Right ventricle myocardium inferior (tissue), 1 donor: ENCODE measurements at regions of chr1 and their contacts with region 1.

Region 1: DNA sequence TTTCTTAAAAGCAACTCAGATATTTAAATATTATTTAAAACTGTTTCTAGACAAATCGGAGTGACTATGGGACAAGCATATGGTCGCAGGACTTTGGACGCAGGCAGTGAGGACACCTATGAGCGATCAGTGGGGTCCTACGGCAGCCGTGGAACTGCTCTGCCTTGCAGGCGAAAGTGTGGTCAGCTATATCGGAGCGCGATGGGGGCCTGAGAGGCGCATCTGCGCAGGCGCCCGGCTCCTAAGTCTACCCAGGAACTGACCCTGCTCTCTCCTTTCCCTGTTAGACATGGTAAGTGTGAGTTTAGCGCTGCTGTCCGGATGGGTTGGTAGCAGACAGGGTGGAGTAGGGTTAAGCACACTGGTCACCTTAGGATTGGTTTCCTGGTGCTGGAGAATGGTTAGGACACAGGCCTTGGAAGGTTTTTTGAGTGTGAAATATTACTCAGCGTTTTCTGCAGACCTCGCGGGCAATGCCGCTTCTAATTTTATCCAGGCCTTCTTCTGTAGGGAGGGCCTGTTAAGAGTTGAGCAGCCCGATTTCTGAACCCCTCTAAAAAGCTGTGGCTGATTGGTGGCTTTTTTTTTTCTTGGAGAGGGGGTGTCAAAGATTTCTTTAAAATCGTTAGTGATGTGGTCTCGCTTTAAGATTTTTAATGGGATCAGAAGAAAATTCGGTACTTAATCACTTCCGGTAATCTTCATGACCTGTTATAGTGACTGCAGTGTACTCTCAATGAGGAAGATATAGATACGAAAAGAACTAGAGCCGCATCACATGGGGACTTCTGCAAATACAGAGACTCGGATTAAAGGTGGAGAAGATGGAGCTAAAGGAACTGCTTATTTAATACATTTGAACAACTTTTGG is at the start of gene RABGGTB:
- DNase-seq: peak; percentile 97
- ATAC-seq: peak; percentile 100
- total RNA-seq, gene RABGGTB: 55.6 TPM

Region 2: GRCh38 chr1:75412616-75413015 is 373.6 kb before region 1 on chr1:
- intact Hi-C with region 1: no loop called
- DNase-seq: no peak
- ATAC-seq: no peak

Region 3: GRCh38 chr1:75724472-75725022 is 61.7 kb before region 1 on chr1 and contains the start of gene ACADM:
- intact Hi-C with region 1: loop called (anchors 1 kb)
- DNase-seq: peak; percentile 94
- ATAC-seq: peak; percentile 99
- total RNA-seq, gene ACADM: 378 TPM